Endothelial cell of umbilical vein (primary cell): ENCODE measurements at regions of chr5 and their contacts with region 1.

Region 1: DNA sequence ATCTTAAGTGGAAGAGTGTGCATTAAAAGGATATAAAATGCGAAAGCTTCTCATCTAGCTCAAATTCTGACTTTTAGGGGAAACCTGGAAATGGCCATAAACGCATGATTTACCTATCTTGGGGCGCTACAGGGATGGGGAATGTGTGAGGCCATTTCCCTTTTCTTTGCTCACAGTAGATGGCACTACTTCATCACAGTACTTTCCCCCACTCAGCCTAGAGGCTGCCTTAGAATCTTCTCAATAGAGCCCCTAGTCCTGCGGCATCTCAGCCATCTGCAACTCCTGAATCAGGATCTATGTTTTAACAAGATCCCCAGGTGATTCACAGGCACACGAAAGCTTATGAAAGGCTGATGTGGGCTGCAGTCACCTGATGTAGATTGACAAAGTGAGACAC is 110.8 kb downstream of the LHFPL2 start:
- DNase-seq: peak; percentile 61
- H3K4me3 ChIP-seq: no peak overlapping the region
- H3K27ac ChIP-seq: no peak overlapping the region
- H3K4me1 ChIP-seq: peaks cover 3% of the 10 kb centered on the region
- H3K27me3 ChIP-seq: no peaks in the 10 kb centered on the region
- CTCF ChIP-seq: peak; percentile 38
- POLR2A ChIP-seq: no peak

Region 2: GRCh38 chr5:78467752-78468357 is 70.0 kb before region 1 on chr5:
- CTCF ChIA-PET with region 1: interaction called, 61 read pairs
- POLR2A ChIA-PET with region 1: no interaction called
- dilution Hi-C with region 1: no loop called
- intact Hi-C with region 1: loop called (anchors 1 kb)
- DNase-seq: peak; percentile 67
- H3K4me3 ChIP-seq: no peak overlapping the region
- H3K27ac ChIP-seq: no peak overlapping the region
- H3K4me1 ChIP-seq: peaks cover 2% of the 10 kb centered on the region
- H3K27me3 ChIP-seq: no peaks in the 10 kb centered on the region
- CTCF ChIP-seq: peak; percentile 50 to 59
- POLR2A ChIP-seq: no peak

Region 3: DNA sequence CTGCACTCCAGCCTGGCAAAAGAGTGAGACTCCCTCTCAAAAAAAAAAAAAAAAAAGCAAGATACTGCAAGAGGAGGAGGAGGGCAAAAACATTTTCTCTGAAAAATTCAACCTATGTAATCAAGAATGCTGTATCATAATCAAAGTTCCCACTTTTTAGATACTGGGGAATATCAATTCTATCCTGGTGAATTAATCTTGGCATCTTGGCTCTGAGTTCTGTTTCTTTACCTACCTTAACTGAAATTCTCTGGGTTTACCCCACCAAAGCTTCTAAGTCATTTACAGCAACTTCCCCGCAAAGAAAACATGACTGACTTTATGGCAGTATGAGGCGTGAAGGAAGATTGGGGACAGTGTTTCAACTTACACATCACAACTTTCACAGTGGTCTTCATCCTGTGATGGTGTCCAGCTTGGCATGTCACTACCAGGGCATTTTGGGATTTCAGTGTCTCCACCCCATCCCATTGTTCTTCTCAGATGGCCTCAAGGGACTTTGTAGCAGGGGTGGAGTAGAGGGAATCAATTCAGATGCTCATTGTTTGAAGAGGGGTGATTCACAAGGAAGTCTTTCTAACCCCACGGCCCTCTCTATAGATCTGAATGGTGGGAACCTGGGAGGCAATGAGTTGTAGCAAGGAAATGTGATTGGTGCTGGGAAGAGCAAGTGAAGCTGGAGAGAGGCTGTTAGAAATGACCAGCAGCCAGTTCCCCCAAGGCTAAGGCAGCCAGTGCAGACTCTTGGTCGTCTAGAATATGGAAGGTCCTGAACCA is 46.9 kb before region 1 on chr5:
- CTCF ChIA-PET with region 1: interaction called, 16 read pairs
- POLR2A ChIA-PET with region 1: no interaction called
- dilution Hi-C with region 1: no loop called
- intact Hi-C with region 1: no loop called
- DNase-seq: peak; percentile 49
- H3K4me3 ChIP-seq: no peak overlapping the region
- H3K27ac ChIP-seq: no peak overlapping the region
- H3K4me1 ChIP-seq: peaks cover 5% of the 10 kb centered on the region
- H3K27me3 ChIP-seq: no peaks in the 10 kb centered on the region
- CTCF ChIP-seq: no peak
- POLR2A ChIP-seq: no peak

Region 4: GRCh38 chr5:78504704-78505677 is 32.8 kb before region 1 on chr5:
- CTCF ChIA-PET with region 1: interaction called, 26 read pairs
- POLR2A ChIA-PET with region 1: no interaction called
- dilution Hi-C with region 1: no loop called
- intact Hi-C with region 1: no loop called
- DNase-seq: peak; percentile 100
- H3K4me3 ChIP-seq: no peak overlapping the region
- H3K27ac ChIP-seq: peak overlapping the region; percentile 86
- H3K4me1 ChIP-seq: peaks cover 18% of the 10 kb centered on the region
- H3K27me3 ChIP-seq: no peaks in the 10 kb centered on the region
- CTCF ChIP-seq: no peak
- POLR2A ChIP-seq: no peak

Region 5: DNA sequence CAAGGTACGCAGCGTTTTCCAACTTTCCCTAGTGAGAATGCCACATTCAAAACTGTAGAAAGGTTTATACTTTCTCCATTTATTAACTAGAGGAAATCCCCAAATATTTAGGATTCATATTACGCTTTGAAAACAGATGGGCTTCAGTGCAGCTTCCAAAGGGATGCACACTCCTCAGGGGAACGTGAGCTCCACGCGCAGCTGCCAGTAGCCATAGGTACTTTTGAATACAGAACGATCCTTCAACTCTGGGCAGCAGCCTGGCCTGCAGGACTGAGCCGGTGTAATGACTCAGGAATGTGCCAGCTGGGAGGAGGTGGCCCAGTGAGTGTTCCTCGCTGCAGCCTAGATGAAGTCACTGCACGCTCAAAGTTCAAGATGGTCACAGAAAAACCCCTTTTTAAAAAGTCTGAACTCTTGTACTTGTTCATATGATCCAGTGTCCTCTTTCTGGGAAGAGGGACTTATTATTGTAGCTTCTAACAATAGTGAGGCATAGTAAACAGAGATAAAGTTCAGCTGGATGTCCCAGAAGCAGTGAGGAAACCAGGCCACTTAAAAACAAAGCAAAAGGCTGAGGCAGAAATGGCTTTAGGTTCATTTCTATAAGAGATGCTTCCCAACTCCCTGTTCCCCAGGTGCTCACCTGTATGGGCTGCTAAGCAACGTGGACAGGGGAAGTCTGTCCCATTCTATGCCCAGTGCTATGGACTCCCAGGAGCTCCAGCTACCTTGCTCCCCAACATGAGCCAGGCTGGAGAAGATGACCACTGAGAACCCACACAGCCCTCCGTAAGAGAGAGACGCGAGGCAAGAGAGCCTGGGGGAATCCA is 19.2 kb before region 1 on chr5:
- CTCF ChIA-PET with region 1: interaction called, 26 read pairs
- POLR2A ChIA-PET with region 1: no interaction called
- dilution Hi-C with region 1: no loop called
- intact Hi-C with region 1: no loop called
- DNase-seq: peak; percentile 92
- H3K4me3 ChIP-seq: no peak overlapping the region
- H3K27ac ChIP-seq: peak overlapping the region; percentile 91
- H3K4me1 ChIP-seq: peaks cover 45% of the 10 kb centered on the region
- H3K27me3 ChIP-seq: no peaks in the 10 kb centered on the region
- CTCF ChIP-seq: no peak
- POLR2A ChIP-seq: no peak

Region 6: GRCh38 chr5:78886341-78887230 is 348.8 kb after region 1 on chr5:
- CTCF ChIA-PET with region 1: interaction called, 5 read pairs
- POLR2A ChIA-PET with region 1: no interaction called
- dilution Hi-C with region 1: no loop called
- intact Hi-C with region 1: loop called (anchors 2 kb)
- DNase-seq: peak; percentile 41
- H3K4me3 ChIP-seq: no peak overlapping the region
- H3K27ac ChIP-seq: no peak overlapping the region
- H3K4me1 ChIP-seq: no peaks in the 10 kb centered on the region
- H3K27me3 ChIP-seq: no peaks in the 10 kb centered on the region
- CTCF ChIP-seq: peak; percentile 37 to 51
- POLR2A ChIP-seq: no peak